CD4-positive, alpha-beta T cell (primary cell): ENCODE measurements at regions of chr3 and their contacts with region 1.

Region 1: DNA sequence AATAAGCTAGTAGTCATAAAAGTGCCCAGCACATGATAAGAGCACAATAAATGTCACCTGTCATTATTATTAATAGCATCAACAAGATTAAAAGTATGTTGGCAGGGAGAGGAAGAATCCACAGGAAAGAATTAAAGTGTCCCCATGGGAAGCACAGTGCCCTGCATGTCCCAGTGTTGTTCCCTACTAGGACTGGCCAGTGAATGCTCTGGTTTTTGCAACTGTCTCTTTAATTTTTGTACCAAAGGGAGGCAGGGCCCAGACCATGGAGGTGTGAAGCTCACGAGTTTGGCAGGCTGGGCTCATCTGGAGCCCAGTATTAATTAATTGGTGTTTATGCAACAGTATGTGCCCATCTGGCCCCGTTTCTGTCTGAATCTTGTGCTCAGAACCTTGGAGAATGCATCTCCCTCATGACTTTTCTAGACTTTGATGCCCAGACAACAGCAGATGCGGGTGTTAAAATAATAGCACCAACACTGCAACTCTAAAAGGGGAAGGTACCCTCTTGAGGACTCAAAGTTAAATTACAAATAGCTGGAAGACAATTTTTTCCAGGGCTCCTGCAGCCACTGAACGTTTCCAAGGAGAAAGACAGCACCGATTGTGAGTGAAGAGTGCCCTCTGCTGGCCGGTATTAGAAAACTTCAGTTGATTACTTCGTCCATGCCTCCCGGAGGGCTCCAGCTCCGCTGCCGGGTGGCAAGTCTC is 71.9 kb upstream of the SPATA12 start:
- DNase-seq: peak; percentile 47 to 88 (median 62)
- ATAC-seq: peak; percentile 67
- H3K4me3 ChIP-seq: no peak overlapping the region
- H3K4me3 Mint-ChIP-seq: peak overlapping the region; percentile 27
- H3K27ac ChIP-seq: no peak overlapping the region
- H3K27ac Mint-ChIP-seq: no peak overlapping the region
- H3K4me1 ChIP-seq: peaks cover 17% of the 10 kb centered on the region
- H3K4me1 Mint-ChIP-seq: peaks cover 20% of the 10 kb centered on the region
- H3K27me3 ChIP-seq: no peaks in the 10 kb centered on the region
- H3K27me3 Mint-ChIP-seq: peaks cover 8% of the 10 kb centered on the region
- CTCF ChIP-seq: peak; percentile 99

Region 2: DNA sequence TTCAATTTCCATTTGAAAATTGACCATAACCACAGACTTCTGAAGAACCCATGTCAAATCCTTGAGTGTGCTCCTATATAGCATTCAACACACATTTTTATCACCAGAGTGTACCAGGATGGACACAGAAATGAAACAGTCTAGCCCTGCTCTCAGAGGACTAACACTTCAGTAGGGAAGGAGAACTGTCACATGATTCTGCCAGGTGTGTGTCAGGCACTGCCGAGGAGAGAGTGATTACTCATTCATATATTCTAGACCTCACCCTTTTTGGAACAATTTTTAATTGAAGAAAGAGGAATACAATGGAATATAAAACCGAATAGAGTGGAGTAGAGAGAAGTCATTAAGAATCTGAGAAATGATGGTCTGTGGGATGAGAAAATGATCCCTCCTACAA is 646.1 kb before region 1 on chr3:
- CTCF ChIA-PET with region 1: no interaction called
- POLR2A ChIA-PET with region 1: no interaction called
- intact Hi-C with region 1: loop called in 1 of 2 experiments (anchors 5 kb)
- DNase-seq: no peak
- ATAC-seq: no peak
- H3K4me3 ChIP-seq: no peak overlapping the region
- H3K4me3 Mint-ChIP-seq: no peak overlapping the region
- H3K27ac ChIP-seq: no peak overlapping the region
- H3K27ac Mint-ChIP-seq: no peak overlapping the region
- H3K4me1 ChIP-seq: no peaks in the 10 kb centered on the region
- H3K4me1 Mint-ChIP-seq: no peaks in the 10 kb centered on the region
- H3K27me3 ChIP-seq: peaks cover 0 to 5% of the 10 kb centered on the region in 2 experiments
- H3K27me3 Mint-ChIP-seq: peaks cover 38% of the 10 kb centered on the region
- CTCF ChIP-seq: no peak

Region 3: DNA sequence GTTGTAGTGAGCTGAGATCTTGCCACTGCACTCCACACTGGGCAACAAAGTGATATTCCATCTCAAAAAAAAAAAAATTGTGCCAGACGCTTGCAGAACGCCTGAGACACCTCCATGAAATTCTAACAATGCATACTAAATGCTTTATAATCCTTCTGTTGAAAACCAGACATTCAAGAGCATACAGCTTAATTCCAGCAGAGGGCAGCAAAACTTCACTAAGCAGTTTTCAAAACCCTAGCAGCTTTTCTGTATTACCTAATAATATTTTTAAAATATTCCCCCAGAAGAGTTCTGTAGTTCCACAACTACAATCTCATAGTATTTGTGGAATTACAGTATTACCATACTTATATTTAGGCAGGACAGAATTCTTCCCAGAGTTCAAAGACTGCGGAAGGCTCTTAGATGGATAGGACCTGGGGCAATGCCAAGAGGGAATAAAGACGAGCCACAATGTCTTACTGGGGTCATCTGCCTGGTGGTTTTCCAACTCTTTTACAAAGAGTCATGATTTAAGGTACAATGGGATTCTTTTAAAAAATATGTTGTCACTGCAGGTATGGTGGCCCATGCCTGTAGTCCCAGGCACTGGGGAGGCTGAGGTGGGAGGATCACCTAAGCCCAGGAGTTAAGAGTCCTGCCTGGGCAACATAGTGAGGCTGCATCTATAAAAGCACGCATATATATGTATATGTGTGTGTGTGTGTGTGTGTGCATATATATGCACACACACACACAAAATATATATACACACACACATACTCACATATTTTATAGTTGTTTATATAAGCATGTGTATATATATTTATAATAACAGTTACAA is 285.9 kb before region 1 on chr3:
- CTCF ChIA-PET with region 1: interaction called, 56 read pairs
- POLR2A ChIA-PET with region 1: interaction called, 12 read pairs
- intact Hi-C with region 1: loop called (anchors 1 kb)
- DNase-seq: peak in 11 of 14 experiments; percentile 14 to 86 (median 40)
- ATAC-seq: peak; percentile 77
- H3K4me3 ChIP-seq: no peak overlapping the region
- H3K4me3 Mint-ChIP-seq: no peak overlapping the region
- H3K27ac ChIP-seq: no peak overlapping the region
- H3K27ac Mint-ChIP-seq: no peak overlapping the region
- H3K4me1 ChIP-seq: peaks cover 12% of the 10 kb centered on the region
- H3K4me1 Mint-ChIP-seq: peaks cover 29% of the 10 kb centered on the region
- H3K27me3 ChIP-seq: no peaks in the 10 kb centered on the region
- H3K27me3 Mint-ChIP-seq: no peaks in the 10 kb centered on the region
- CTCF ChIP-seq: peak; percentile 84

Region 4: GRCh38 chr3:56855856-56856512 is 132.6 kb before region 1 on chr3:
- CTCF ChIA-PET with region 1: interaction called, 3 read pairs
- POLR2A ChIA-PET with region 1: no interaction called
- intact Hi-C with region 1: loop called (anchors 2 kb)
- DNase-seq: peak in 8 of 14 experiments; percentile 10 to 51 (median 28)
- ATAC-seq: no peak
- H3K4me3 ChIP-seq: no peak overlapping the region
- H3K4me3 Mint-ChIP-seq: no peak overlapping the region
- H3K27ac ChIP-seq: no peak overlapping the region
- H3K27ac Mint-ChIP-seq: no peak overlapping the region
- H3K4me1 ChIP-seq: peaks cover 36% of the 10 kb centered on the region
- H3K4me1 Mint-ChIP-seq: peaks cover 52% of the 10 kb centered on the region
- H3K27me3 ChIP-seq: no peaks in the 10 kb centered on the region
- H3K27me3 Mint-ChIP-seq: no peaks in the 10 kb centered on the region
- CTCF ChIP-seq: peak; percentile 64

Region 5: DNA sequence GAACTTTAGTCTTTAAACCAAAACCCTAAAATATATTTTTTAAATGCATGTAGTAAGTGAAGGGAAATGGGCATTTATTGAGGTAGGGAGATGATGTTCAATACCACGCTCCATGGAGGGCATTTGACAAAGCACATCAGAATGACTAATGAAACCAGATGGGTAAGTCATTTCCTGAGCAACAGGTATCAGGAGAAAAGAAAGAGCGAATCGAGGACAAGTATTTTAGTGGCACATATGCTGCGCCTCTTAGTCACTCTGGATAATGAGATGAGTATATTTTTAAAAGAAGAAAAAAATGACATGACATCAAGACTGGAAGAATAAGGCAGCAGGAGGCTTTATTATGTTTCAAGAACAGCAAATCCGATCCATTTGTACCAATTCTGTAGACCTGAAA is 57.9 kb before region 1 on chr3:
- CTCF ChIA-PET with region 1: no interaction called
- POLR2A ChIA-PET with region 1: no interaction called
- intact Hi-C with region 1: loop called in 1 of 2 experiments (anchors 5 kb)
- DNase-seq: peak in 1 of 14 experiments; percentile 32
- ATAC-seq: peak; percentile 12
- H3K4me3 ChIP-seq: no peak overlapping the region
- H3K4me3 Mint-ChIP-seq: peak overlapping the region; percentile 20
- H3K27ac ChIP-seq: no peak overlapping the region
- H3K27ac Mint-ChIP-seq: peak overlapping the region; percentile 0
- H3K4me1 ChIP-seq: peaks cover 40% of the 10 kb centered on the region
- H3K4me1 Mint-ChIP-seq: peaks cover 55% of the 10 kb centered on the region
- H3K27me3 ChIP-seq: no peaks in the 10 kb centered on the region
- H3K27me3 Mint-ChIP-seq: no peaks in the 10 kb centered on the region
- CTCF ChIP-seq: no peak